Activated B cell treated with CpG ODN at 0.5 μM for 24 hours (primary cell): ENCODE measurements at regions of chr19 and their contacts with region 1.

Region 1: DNA sequence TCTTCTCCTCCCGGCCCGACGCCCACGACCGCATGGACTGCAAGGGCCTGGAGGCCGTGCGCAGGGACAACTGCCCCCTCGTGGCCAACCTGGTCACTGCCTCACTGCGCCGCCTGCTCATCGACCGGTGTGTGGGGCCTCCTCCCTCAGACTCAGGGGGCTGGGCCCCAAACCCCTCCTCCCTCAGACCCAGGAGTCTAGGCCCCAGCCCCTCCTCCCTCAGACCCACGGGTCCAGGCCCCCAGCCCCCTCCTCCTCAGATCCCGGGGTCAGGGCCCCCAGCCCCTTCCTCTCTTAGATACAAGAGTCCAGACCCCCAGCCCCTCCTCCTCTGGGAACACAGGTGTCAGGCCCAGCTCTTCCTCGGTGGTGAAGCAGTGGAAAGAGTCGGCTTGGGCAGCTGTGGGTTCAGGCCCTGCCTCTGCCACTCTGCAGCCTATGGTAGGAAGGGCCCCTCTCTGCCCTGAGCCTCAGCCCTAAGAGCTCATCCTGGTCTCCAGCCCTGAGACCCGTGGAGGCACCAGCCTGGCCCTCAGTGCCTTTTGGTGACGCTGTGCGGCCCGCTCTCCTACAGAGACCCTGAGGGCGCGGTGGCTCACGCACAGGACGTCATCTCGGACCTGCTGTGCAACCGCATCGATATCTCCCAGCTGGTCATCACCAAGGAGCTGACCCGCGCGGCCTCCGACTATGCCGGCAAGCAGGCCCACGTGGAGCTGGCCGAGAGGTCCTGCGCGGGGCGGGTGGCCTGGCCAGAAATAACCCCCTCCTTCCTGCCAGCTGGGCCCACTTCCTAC is 3.7 kb upstream of the SPIB start:
- DNase-seq: peak; percentile 84
- ATAC-seq: peak; percentile 32
- H3K4me3 Mint-ChIP-seq: peak overlapping the region; percentile 70
- H3K27ac Mint-ChIP-seq: peak overlapping the region; percentile 95
- H3K4me1 Mint-ChIP-seq: peaks cover 39% of the 10 kb centered on the region
- H3K27me3 Mint-ChIP-seq: no peaks in the 10 kb centered on the region
- CTCF ChIP-seq: no peak

Region 2: GRCh38 chr19:50341091-50341564 is 73.9 kb before region 1 on chr19:
- CTCF ChIA-PET with region 1: no interaction called
- POLR2A ChIA-PET with region 1: interaction called, 52 read pairs
- intact Hi-C with region 1: no loop called
- DNase-seq: no peak
- ATAC-seq: peak; percentile 65
- H3K4me3 Mint-ChIP-seq: peak overlapping the region; percentile 81
- H3K27ac Mint-ChIP-seq: peak overlapping the region; percentile 92
- H3K4me1 Mint-ChIP-seq: peaks cover 81% of the 10 kb centered on the region
- H3K27me3 Mint-ChIP-seq: no peaks in the 10 kb centered on the region
- CTCF ChIP-seq: no peak

Region 3: GRCh38 chr19:50376166-50377050 is 38.7 kb before region 1 on chr19 and contains the start of gene NR1H2:
- CTCF ChIA-PET with region 1: interaction called, 4 read pairs
- POLR2A ChIA-PET with region 1: interaction called, 20 read pairs
- intact Hi-C with region 1: loop called (anchors 1 kb)
- DNase-seq: peak; percentile 90
- ATAC-seq: peak; percentile 88
- H3K4me3 Mint-ChIP-seq: peak within 1 kb of the TSS; percentile 99
- H3K27ac Mint-ChIP-seq: peak within 1 kb of the TSS; percentile 99
- H3K4me1 Mint-ChIP-seq: peaks cover 14% of the 10 kb centered on the region
- H3K27me3 Mint-ChIP-seq: no peaks in the 10 kb centered on the region
- CTCF ChIP-seq: no peak
- total RNA-seq, gene NR1H2: 66.9 and 79.5 TPM in 2 replicates

Region 4: GRCh38 chr19:50431343-50432220 is 16.5 kb after region 1 on chr19:
- CTCF ChIA-PET with region 1: interaction called, 6 read pairs
- POLR2A ChIA-PET with region 1: interaction called, 282 read pairs
- intact Hi-C with region 1: loop called (anchors 1 kb)
- DNase-seq: peak; percentile 91
- ATAC-seq: peak; percentile 64
- H3K4me3 Mint-ChIP-seq: peak overlapping the region; percentile 89
- H3K27ac Mint-ChIP-seq: peak overlapping the region; percentile 95
- H3K4me1 Mint-ChIP-seq: peaks cover 95% of the 10 kb centered on the region
- H3K27me3 Mint-ChIP-seq: no peaks in the 10 kb centered on the region
- CTCF ChIP-seq: no peak

Region 5: GRCh38 chr19:50476224-50476942 is 61.3 kb after region 1 on chr19 and contains the starts of genes EMC10 and GARIN5A:
- CTCF ChIA-PET with region 1: no interaction called
- POLR2A ChIA-PET with region 1: interaction called, 8 read pairs
- intact Hi-C with region 1: loop called (anchors 1 kb)
- DNase-seq: peak; percentile 95
- ATAC-seq: peak; percentile 95
- H3K4me3 Mint-ChIP-seq: peak within 1 kb of the TSS; percentile 93
- H3K27ac Mint-ChIP-seq: peak within 1 kb of the TSS; percentile 85
- H3K4me1 Mint-ChIP-seq: peaks cover 23% of the 10 kb centered on the region
- H3K27me3 Mint-ChIP-seq: no peaks in the 10 kb centered on the region
- CTCF ChIP-seq: no peak
- total RNA-seq, gene EMC10: 70.8 and 72.1 TPM in 2 replicates
- total RNA-seq, gene GARIN5A: 0.29 and 0.67 TPM in 2 replicates

Region 6: DNA sequence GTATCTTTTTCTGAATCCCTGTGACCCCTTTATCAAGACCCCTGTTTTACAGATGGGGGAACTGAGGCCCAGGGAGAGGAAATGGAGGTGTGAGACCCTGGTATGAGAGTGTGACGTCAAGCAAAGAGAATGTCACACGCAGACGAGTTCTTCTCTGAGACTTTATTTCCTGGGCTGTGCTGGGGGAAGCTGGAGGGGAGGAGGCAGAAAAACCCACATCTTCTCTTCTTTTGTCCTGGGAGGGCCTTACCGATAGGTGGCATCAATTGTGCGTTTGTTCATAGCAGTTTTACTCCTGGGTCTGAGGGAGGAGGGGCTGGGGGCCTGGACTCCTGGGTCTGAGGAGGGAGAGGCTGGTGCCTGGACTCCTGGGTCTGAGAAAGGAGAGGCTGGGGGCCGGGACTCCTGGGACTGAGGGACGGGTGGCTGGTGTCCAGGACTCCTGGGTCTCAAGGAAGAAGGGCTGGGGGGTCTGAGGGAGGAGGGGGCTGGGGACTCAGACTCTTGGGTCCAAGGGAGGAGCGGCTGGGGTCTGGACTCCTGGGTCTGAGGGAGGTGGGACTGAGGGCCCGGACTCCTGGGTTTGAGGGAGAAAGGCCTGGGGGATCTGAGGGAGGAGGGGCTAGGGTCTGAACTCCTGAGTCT is 423.3 kb after region 1 on chr19:
- CTCF ChIA-PET with region 1: no interaction called
- POLR2A ChIA-PET with region 1: no interaction called
- intact Hi-C with region 1: no loop called
- DNase-seq: no peak
- ATAC-seq: no peak
- H3K4me3 Mint-ChIP-seq: no peak overlapping the region
- H3K27ac Mint-ChIP-seq: no peak overlapping the region
- H3K4me1 Mint-ChIP-seq: peaks cover 27% of the 10 kb centered on the region
- H3K27me3 Mint-ChIP-seq: peaks cover 20% of the 10 kb centered on the region
- CTCF ChIP-seq: no peak